HEK293T (cell line): ENCODE measurements at regions of chr20 and their contacts with region 1.

Region 1: DNA sequence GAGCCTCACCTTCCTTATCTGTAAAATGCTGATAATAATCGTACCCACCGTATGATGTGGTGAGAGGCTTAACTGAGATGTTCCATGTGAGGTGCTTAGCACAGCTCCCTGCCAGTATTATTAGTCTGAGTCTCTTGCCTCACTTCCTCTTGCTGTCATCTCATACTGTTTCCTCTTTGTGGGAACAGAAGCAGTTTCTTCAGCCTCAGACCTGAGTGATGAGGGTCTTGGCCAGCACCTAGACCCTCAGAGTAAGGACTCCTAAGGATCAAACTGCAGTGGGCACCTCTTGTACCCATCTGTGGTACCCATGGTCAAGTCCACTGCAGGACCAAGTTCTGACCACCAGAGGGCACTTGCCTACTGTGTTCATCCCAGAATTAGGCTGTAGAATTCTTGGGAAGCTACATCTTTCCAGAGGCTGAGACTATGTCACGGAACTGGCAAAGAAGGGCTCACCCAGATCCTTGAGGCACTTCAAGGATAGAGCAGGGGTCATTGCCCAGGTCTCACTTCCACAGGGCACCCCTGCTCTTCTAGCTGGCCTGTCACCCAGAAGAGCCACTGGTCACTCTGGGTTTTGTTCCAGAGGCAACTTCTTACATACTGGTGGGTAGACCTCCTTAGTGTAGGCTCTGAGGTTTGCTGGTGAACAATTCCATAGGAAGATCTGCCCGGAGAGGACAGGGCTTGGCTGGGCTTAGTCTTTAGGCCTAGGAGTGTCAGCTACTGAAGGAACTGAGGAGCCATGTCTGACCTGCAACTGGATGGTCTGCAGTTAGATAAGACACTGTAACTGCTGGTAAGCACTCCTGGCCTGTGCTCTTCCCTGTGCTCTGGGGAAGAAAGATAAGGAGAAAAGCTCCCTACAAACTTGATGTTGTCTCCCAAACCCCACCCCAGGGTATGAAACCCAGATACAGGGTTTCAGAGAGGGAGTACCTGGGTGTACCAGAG is 20.6 kb upstream of the SGK2 start:
- DNase-seq: peak; percentile 67

Region 2: GRCh38 chr20:43408848-43409576 is 129.2 kb before region 1 on chr20:
- CTCF ChIA-PET with region 1: no interaction called
- POLR2A ChIA-PET with region 1: no interaction called
- DNase-seq: peak; percentile 50

Region 3: GRCh38 chr20:43549416-43550065 is 11.3 kb after region 1 on chr20:
- CTCF ChIA-PET with region 1: interaction called, 10 read pairs
- POLR2A ChIA-PET with region 1: no interaction called
- DNase-seq: no peak